Activated CD4-positive, alpha-beta T cell treated with anti-CD3 and anti-CD28 coated beads for 36 hours (primary cell): ENCODE measurements at regions of chr21 and their contacts with region 1.

Region 1: GRCh38 chr21:16194095-16194787 is 464.5 kb downstream of the USP25 start:
- DNase-seq: peak; percentile 59
- ATAC-seq: peak; percentile 74
- H3K4me3 Mint-ChIP-seq: peak overlapping the region; percentile 59
- H3K27ac Mint-ChIP-seq: peak overlapping the region; percentile 64
- H3K4me1 Mint-ChIP-seq: peaks cover 14% of the 10 kb centered on the region
- H3K27me3 Mint-ChIP-seq: no peaks in the 10 kb centered on the region

Region 2: DNA sequence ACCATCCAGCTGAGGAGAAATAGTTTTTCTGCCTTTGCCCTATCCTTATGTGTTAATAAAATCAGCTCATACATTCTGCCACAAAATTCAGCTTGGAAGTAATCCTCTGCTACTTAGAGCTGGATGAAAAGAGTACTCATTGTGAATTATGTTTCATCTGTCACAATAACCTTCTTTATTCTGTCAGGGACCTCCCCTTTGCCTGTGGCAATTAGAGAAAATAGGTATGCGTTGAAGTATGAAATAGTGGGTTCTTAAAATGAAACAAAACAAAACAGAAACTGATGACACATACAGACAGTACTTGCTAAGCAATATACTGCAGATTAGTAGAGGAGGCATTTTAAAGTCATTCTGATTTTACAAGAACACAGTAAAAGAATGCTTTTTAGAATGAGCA is 114.0 kb after region 1 on chr21:
- CTCF ChIA-PET with region 1: interaction called, 3 read pairs
- POLR2A ChIA-PET with region 1: no interaction called
- intact Hi-C with region 1: loop called (anchors 2 to 5 kb)
- DNase-seq: no peak
- ATAC-seq: peak; percentile 97
- H3K4me3 Mint-ChIP-seq: no peak overlapping the region
- H3K27ac Mint-ChIP-seq: no peak overlapping the region
- H3K4me1 Mint-ChIP-seq: peaks cover 12% of the 10 kb centered on the region
- H3K27me3 Mint-ChIP-seq: no peaks in the 10 kb centered on the region

Region 3: GRCh38 chr21:16324630-16325029 is 130.4 kb after region 1 on chr21:
- CTCF ChIA-PET with region 1: no interaction called
- POLR2A ChIA-PET with region 1: no interaction called
- intact Hi-C with region 1: loop called in 1 of 2 experiments (anchors 5 kb)
- DNase-seq: no peak
- ATAC-seq: no peak
- H3K4me3 Mint-ChIP-seq: no peak overlapping the region
- H3K27ac Mint-ChIP-seq: no peak overlapping the region
- H3K4me1 Mint-ChIP-seq: peaks cover 3% of the 10 kb centered on the region
- H3K27me3 Mint-ChIP-seq: no peaks in the 10 kb centered on the region